ENCODE measurements at regions of chr16 and their contacts with region 1.

Region 1: DNA sequence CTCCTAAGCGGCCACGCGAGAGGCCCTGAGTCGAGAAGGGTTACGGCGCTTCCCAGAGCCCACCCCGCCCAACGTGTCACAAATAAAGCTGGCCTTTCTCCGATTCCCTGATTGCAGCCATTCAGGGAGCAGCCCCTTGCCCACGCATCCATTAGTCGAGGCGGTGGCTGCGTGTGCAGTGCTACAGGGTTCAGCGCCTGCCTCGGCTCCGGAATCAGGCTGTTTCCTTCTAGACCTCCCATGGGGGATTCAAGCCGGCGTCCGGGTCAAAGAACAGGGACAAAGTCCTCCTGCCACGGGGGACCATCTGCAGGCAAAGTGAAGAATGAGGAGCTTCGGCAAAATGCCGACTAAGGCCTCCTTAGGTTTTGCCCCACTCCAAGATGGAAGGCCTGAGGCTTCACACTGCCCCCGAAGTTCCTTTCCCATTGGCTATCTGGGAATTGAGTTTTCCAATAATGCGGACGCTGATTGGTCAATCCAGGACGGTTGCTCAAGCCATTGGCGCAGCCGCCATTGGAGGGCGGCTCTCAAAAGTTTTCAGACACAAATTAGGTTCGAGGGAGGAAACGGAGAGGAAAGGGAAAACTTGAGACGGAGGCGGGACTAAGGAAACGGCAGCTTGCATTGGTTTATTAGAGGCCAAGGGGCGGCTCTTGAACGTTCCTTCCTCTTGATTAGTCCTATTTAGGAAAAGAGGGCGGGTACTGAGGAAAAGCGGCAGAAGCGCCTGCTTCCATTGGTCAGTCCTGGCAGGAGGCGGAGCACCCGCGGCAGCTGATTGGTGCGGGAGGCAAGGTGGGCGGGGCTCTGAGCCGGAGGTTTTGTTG is 430 bp upstream of the KATNB1 start:
- DNase-seq: peak; percentile 100
- H3K27ac ChIP-seq: peak overlapping the region; percentile 75
- CTCF ChIP-seq: no peak

Region 2: GRCh38 chr16:57576429-57576870 is 158.7 kb before region 1 on chr16:
- CTCF ChIA-PET with region 1: interaction called, 13 read pairs
- POLR2A ChIA-PET with region 1: no interaction called
- DNase-seq: peak; percentile 66
- H3K27ac ChIP-seq: no peak overlapping the region
- CTCF ChIP-seq: peak; percentile 97

Region 3: DNA sequence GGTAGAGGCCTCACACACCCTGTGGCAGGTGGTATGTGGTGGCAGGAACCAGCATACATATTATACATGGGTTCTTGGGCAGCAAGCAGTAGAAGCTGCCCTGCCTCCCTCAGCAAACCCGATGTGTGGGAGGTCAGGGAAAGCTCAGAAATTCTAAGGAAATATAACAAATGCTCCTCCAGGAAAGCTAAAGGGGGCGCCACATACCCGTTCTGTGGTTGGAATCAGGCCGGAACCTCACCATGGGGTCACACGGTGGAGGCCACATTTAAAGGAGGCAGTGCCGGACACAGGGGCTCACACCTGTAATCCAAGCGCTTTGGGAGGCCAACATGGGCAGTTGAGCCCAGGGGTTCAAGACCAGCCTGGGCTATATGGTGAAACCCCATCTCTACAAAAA is 12.0 kb before region 1 on chr16:
- CTCF ChIA-PET with region 1: no interaction called
- POLR2A ChIA-PET with region 1: no interaction called
- DNase-seq: no peak
- H3K27ac ChIP-seq: no peak overlapping the region
- CTCF ChIP-seq: no peak

Region 4: DNA sequence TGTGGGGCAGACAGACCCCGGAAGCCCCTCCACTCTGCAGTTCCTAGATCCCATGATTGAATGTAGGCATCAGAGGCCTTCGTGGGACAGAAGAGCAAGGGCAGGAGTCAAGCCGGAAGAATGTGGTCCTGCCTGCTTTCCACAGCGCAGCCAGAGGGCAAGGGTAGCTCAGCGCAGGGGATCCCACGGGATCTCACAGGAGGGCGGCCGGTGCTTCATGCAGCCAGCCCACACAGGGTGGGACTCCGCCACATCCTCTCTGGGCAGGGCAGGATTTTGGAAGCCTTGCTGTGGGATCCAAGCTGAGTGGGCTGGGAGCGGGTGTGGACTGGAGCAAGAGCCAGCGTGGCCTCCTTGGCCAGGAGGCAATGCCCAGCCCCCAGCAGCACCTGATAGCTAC is 13.5 kb after region 1 on chr16:
- CTCF ChIA-PET with region 1: interaction called, 12 read pairs
- POLR2A ChIA-PET with region 1: no interaction called
- DNase-seq: no peak
- H3K27ac ChIP-seq: peak overlapping the region; percentile 13; the same call in 1 of the 2 replicates
- CTCF ChIP-seq: no peak

Region 5: DNA sequence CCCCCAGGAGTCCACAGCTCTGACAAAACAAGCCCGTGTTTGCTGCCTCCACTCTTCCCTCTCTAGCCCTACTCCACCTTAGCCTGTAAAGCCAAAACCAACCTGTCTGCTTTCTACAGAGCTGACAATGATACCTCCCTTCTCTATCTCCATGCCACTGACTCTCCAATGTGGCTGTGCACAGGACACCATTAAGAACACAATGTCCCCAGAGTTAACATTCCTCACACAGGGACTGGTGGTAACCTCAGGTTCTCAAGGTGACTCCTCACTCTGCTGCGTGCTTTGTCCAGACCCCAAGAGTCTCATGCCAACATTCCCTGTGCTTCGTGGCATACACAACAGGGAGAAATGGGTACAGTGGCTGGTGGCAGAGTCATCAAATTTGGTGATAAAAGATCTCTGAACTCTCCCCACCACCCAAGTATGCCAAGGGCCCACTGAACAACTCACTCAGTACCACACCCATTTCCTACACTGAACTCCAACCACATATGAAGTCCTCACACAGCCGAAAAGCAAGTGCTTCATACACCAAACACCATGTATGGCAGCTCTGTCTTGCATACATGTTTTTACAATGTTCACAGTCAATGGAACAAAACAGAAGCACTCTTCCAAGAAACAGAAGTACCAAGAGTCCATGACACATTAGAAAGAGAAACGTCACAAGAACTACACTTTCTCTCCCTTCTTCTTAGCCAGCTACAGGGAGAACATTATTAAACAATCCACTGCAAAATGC is 441.6 kb after region 1 on chr16:
- CTCF ChIA-PET with region 1: no interaction called
- POLR2A ChIA-PET with region 1: no interaction called
- DNase-seq: no peak
- H3K27ac ChIP-seq: no peak overlapping the region
- CTCF ChIP-seq: no peak

Measured in RWPE1 (cell line).